Endothelial cell of umbilical vein (primary cell): ENCODE measurements at regions of chr20 and their contacts with region 1.

Region 1: GRCh38 chr20:62386383-62387218 is at the start of gene RPS21:
- DNase-seq: peak; percentile 92
- H3K4me3 ChIP-seq: peak within 1 kb of the TSS; percentile 72 to 82 (median 81)
- H3K27ac ChIP-seq: peak within 1 kb of the TSS; percentile 91
- H3K4me1 ChIP-seq: peaks cover 17% of the 10 kb centered on the region
- H3K27me3 ChIP-seq: no peaks in the 10 kb centered on the region
- CTCF ChIP-seq: no peak
- POLR2A ChIP-seq: peak; percentile 90
- total RNA-seq, gene RPS21: 1,627 and 1,644 TPM in 2 replicates

Region 2: GRCh38 chr20:62237801-62238571 is 148.6 kb before region 1 on chr20 and contains the start of gene OSBPL2:
- CTCF ChIA-PET with region 1: no interaction called
- POLR2A ChIA-PET with region 1: no interaction called
- dilution Hi-C with region 1: no loop called
- intact Hi-C with region 1: loop called (anchors 2 kb)
- DNase-seq: peak; percentile 99
- H3K4me3 ChIP-seq: peak within 1 kb of the TSS in 2 of 3 experiments; percentile 20 to 74
- H3K27ac ChIP-seq: no peak within 1 kb of the TSS
- H3K4me1 ChIP-seq: peaks cover 5% of the 10 kb centered on the region
- H3K27me3 ChIP-seq: no peaks in the 10 kb centered on the region
- CTCF ChIP-seq: no peak
- POLR2A ChIP-seq: no peak
- total RNA-seq, gene OSBPL2: 32.7 and 33.0 TPM in 2 replicates

Region 3: DNA sequence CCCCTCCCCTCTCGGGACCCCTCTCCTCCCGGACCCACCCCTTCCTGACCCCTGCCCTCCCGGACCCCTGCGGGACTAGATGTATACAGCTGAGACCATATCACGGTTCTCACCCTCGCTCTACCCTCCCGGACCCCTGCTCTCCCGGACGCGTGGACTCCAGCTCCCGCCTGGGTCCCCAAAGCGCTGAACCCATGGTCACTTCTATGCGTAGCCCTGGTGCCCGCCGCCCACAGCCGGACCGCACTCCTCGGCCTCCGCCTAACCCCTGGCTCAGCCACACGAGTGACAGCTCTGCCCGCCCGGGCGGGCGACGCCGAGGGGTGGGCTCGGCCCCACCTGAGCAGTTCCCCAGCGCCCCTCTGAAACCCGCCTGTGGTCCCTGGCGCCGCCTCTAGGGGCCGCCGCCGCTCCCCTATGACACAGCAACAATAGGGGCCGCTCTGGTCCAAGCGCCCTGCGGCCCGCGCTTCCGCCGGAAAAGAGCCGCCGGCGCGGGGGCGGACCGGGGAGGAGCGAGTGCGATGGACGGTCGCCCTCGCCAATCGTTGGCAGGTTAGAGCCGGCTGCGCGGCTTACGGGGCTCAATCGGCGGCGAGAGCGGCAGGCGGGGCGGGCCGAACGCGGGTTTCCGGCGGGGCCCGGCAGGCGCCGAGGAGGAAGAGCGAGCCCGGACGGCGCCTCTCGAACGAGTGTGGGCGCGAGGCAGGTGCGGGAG is 84.1 kb before region 1 on chr20 and contains the start of gene ADRM1:
- CTCF ChIA-PET with region 1: interaction called, 113 read pairs
- POLR2A ChIA-PET with region 1: interaction called, 3 read pairs
- dilution Hi-C with region 1: no loop called
- intact Hi-C with region 1: loop called (anchors 1 kb)
- DNase-seq: peak; percentile 98
- H3K4me3 ChIP-seq: peak within 1 kb of the TSS; percentile 32 to 95 (median 50)
- H3K27ac ChIP-seq: peak within 1 kb of the TSS; percentile 84
- H3K4me1 ChIP-seq: peaks cover 21% of the 10 kb centered on the region
- H3K27me3 ChIP-seq: no peaks in the 10 kb centered on the region
- CTCF ChIP-seq: peak; percentile 92 to 95
- POLR2A ChIP-seq: peak; percentile 59
- total RNA-seq, gene ADRM1: 144 and 154 TPM in 2 replicates

Region 4: DNA sequence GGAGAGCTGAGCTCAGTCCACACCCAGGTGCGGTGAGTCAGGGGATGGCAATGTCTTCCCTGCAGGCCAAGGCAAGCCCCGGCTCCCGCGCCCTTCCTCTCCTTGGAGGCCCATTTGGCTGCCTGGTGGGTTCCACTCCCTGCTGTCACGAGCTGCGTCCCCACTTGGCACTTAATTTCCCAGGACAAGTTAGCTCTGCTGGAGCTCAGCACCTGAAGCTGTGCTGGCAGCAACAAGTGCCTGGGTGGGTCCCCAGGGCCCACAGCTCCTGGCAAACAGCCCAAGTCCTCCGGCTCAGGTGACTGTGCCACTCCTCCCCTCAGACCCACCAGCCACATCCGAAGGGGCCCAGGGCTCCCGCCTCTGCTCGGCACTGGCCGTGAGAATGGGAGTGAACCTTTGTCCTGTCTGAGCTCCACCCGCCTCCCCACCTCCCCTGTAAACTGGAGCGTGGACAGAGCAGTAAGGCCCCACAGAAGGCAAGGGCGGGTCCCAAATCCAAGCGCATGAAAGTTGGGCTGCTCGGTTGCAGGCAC is 36.4 kb before region 1 on chr20:
- CTCF ChIA-PET with region 1: interaction called, 29 read pairs
- POLR2A ChIA-PET with region 1: no interaction called
- dilution Hi-C with region 1: no loop called
- intact Hi-C with region 1: no loop called
- DNase-seq: no peak
- H3K4me3 ChIP-seq: no peak overlapping the region
- H3K27ac ChIP-seq: peak overlapping the region; percentile 3
- H3K4me1 ChIP-seq: peaks cover 1% of the 10 kb centered on the region
- H3K27me3 ChIP-seq: no peaks in the 10 kb centered on the region
- CTCF ChIP-seq: no peak
- POLR2A ChIP-seq: no peak

Region 5: DNA sequence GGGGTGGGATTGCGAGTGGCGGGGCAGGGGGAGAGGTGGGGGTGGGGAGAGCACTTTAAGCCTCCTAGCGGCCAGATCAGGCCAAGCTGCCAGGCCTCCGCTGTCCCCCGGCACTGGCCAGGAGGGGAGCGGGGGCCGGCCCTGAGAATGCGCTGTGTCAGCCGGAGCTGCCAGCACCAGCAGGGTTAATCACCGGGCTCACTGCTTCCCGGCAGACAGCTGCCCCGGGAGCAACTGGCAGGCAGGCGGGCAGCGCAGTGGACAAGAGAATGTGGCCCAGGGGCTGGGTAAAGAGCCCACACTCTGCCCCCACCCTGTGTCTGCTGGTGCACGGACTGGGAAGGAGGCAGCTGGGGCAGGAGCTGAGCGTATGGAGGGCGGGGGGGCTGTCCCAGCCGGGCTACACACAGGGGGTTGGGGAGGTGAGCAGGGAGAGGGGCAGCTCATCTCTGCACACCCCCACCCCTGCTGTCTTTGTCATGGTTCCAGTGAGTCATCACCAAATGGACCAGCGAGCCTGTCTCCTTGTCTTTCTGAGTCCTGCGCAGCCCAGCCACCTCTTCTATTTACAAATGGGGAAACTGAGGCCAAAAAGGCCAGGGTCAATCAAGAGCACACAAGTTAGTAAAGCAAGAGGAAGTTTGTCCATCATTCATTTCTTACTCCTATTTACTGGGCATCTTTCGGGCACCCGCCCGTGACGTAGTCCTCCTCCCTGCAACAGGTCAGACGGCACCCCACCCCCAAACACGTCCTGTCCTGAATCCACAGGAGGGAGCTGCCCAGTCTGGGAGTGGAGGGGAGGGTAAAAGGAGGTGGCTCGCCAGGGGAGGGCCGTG is 17.4 kb before region 1 on chr20:
- CTCF ChIA-PET with region 1: interaction called, 179 read pairs
- POLR2A ChIA-PET with region 1: interaction called, 6 read pairs
- dilution Hi-C with region 1: no loop called
- intact Hi-C with region 1: no loop called
- DNase-seq: peak; percentile 50
- H3K4me3 ChIP-seq: no peak overlapping the region
- H3K27ac ChIP-seq: no peak overlapping the region
- H3K4me1 ChIP-seq: peaks cover 33% of the 10 kb centered on the region
- H3K27me3 ChIP-seq: no peaks in the 10 kb centered on the region
- CTCF ChIP-seq: peak; percentile 31 to 62
- POLR2A ChIP-seq: no peak

Region 6: GRCh38 chr20:62631336-62632308 is 245.0 kb after region 1 on chr20:
- CTCF ChIA-PET with region 1: no interaction called
- POLR2A ChIA-PET with region 1: no interaction called
- dilution Hi-C with region 1: no loop called
- intact Hi-C with region 1: no loop called
- DNase-seq: no peak
- H3K4me3 ChIP-seq: no peak overlapping the region
- H3K27ac ChIP-seq: no peak overlapping the region
- H3K4me1 ChIP-seq: no peaks in the 10 kb centered on the region
- H3K27me3 ChIP-seq: peaks cover under 1 to 4% of the 10 kb centered on the region in 2 experiments
- CTCF ChIP-seq: no peak
- POLR2A ChIP-seq: no peak

Region 7: GRCh38 chr20:62808211-62808865 is 421.7 kb after region 1 on chr20:
- CTCF ChIA-PET with region 1: no interaction called
- POLR2A ChIA-PET with region 1: no interaction called
- dilution Hi-C with region 1: no loop called
- intact Hi-C with region 1: loop called (anchors 10 kb)
- DNase-seq: peak; percentile 44
- H3K4me3 ChIP-seq: no peak overlapping the region
- H3K27ac ChIP-seq: no peak overlapping the region
- H3K4me1 ChIP-seq: peaks cover 11% of the 10 kb centered on the region
- H3K27me3 ChIP-seq: no peaks in the 10 kb centered on the region
- CTCF ChIP-seq: peak; percentile 78 to 93
- POLR2A ChIP-seq: no peak